ENCODE measurements at regions of chr9 and their contacts with region 1.

Region 1: DNA sequence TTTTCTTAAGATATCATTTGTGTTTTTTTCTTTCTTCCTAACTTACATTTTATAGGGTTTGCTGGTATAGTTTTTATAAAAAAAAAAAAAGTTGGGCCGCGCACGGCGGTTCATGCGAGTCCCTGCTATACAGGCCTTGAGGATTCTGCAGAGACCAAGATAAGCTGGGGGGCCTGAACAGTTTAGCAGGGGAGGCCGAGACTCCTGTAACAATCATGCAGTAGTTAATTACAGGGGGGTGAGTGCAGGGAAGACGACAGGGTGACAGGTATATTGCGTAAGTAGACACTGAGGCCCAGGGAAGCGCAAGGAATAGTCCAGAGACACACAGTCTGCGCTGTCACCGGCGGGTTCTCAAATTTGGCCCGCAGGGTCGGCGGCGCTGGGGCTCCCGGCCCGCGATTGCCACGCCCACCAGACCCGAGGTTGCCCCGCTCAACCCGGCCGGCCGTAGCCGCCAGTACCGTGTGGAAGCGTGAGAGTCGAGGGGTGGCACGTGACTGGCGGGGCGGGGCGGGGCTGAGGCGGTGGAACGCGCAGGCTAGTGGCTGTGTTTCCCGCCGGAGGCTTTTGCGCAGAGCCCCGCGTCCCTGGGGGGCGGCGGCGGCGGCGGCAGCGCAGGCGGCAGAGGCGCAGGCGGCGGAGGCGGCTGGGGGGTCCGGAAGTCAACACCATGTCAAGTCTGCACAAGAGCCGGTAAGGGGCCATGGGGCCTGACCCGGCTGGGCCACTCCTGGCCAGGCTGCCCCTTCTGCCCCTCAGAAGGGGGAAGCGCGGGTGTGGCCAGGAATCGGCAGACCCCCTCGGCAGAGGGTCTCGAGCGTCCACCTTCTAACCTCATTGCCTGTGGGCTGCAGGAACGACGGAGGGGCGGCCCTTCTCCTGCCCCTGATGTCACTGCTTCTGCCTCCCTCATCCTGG is at the start of gene TBC1D13:
- DNase-seq: peak; percentile 75
- ATAC-seq: peak; percentile 96
- H3K4me3 ChIP-seq: peak within 1 kb of the TSS; percentile 78 to 94 (median 78)
- H3K27ac ChIP-seq: peak within 1 kb of the TSS; percentile 52
- H3K4me1 ChIP-seq: peaks cover 26% of the 10 kb centered on the region
- H3K27me3 ChIP-seq: no peaks in the 10 kb centered on the region; a peak in 1 of 5 replicates
- CTCF ChIP-seq: peak; percentile 29; the same call in 1 of the 2 replicates
- EP300 ChIP-seq: 0 out of 4 replicates have a peak, but pooled peaks of 1 of the 2 experiments have one; percentile 15
- POLR2A ChIP-seq: peak in 1 of 2 experiments; percentile 74; a peak in 2 of 4 replicates
- RAD21 ChIP-seq: peak; percentile 56
- total RNA-seq, gene TBC1D13: 17.9 and 18.4 TPM in 2 replicates

Region 2: GRCh38 chr9:128696923-128697707 is 89.8 kb before region 1 on chr9:
- CTCF ChIA-PET with region 1: no interaction called
- POLR2A ChIA-PET with region 1: no interaction called
- in situ Hi-C with region 1: no loop called
- intact Hi-C with region 1: no loop called
- DNase-seq: no peak
- ATAC-seq: peak; percentile 18; the same call in 2 of the 3 replicates
- H3K4me3 ChIP-seq: no peak overlapping the region
- H3K27ac ChIP-seq: no peak overlapping the region
- H3K4me1 ChIP-seq: peaks cover 14% of the 10 kb centered on the region
- H3K27me3 ChIP-seq: no peaks in the 10 kb centered on the region
- CTCF ChIP-seq: no peak
- EP300 ChIP-seq: no peak
- POLR2A ChIP-seq: peak in 1 of 2 experiments; percentile 42; a peak in 2 of 4 replicates
- RAD21 ChIP-seq: no peak

Region 3: GRCh38 chr9:128771745-128772519 is 15.0 kb before region 1 on chr9 and contains the start of gene ZER1:
- CTCF ChIA-PET with region 1: no interaction called
- POLR2A ChIA-PET with region 1: interaction called, 6 read pairs
- in situ Hi-C with region 1: no loop called
- intact Hi-C with region 1: loop called (anchors 1 kb)
- DNase-seq: peak; percentile 67
- ATAC-seq: peak; percentile 95
- H3K4me3 ChIP-seq: peak within 1 kb of the TSS; percentile 80 to 99 (median 96)
- H3K27ac ChIP-seq: peak within 1 kb of the TSS; percentile 68
- H3K4me1 ChIP-seq: peaks cover 19% of the 10 kb centered on the region
- H3K27me3 ChIP-seq: no peaks in the 10 kb centered on the region; a peak in 1 of 5 replicates
- CTCF ChIP-seq: peak; percentile 36; the same call in 1 of the 2 replicates
- EP300 ChIP-seq: peak; percentile 40 to 59; a peak in 2 of 4 replicates
- POLR2A ChIP-seq: peak; percentile 27 to 47; a peak in 3 of 4 replicates
- RAD21 ChIP-seq: peak; percentile 84
- total RNA-seq, gene ZER1: 7.7 and 9.1 TPM in 2 replicates

Region 4: GRCh38 chr9:128845155-128845931 is 58.4 kb after region 1 on chr9:
- CTCF ChIA-PET with region 1: no interaction called
- POLR2A ChIA-PET with region 1: no interaction called
- in situ Hi-C with region 1: no loop called
- intact Hi-C with region 1: no loop called
- DNase-seq: peak; percentile 50
- ATAC-seq: peak; percentile 87
- H3K4me3 ChIP-seq: no peak overlapping the region; a peak in 1 of 6 replicates
- H3K27ac ChIP-seq: peak overlapping the region; percentile 55
- H3K4me1 ChIP-seq: peaks cover 66% of the 10 kb centered on the region
- H3K27me3 ChIP-seq: no peaks in the 10 kb centered on the region
- CTCF ChIP-seq: peak; percentile 43
- EP300 ChIP-seq: no peak
- POLR2A ChIP-seq: no peak
- RAD21 ChIP-seq: 0 out of 2 replicates have a peak, but pooled peaks have one; percentile 17

Measured in HepG2 (cell line).